CD14-positive monocyte (primary cell): ENCODE measurements at regions of chr19 and their contacts with region 1.

Region 1: DNA sequence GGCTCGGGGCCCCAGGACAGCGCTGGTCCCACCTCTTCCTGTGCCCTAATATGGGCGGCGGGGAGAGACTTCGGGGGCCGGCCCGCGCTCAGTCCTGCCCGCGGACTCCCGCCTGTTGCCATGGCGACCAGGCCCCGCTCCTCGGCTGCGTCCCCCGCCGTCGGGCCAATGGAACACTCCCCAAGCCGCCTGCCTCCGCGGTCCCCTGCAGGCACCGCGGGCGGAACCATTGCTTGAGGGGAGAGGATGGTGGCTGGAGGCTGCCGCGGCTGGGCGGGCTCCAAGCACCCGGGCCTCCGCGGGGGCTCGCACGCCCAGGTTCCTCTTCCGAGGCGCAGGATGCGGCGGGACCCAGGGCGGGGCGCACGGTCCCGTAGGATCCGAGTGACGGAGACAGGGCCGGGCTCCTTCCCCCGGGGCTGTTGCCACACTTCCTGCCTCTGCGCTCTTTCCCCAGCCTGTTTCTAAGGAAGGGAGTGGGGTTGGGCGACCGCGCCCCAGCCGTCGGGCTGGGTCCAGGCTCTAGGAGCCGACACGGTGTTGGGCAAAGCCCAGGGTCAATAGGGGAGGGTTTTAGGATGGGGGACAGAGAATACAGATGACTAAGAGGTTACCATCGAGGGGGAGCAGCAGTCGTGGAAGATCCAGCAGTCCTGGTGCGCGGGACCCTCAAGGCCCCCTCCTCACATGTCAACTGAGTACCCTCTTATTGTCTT is 1.2 kb upstream of the JUNB start:
- DNase-seq: peak; percentile 97 to 99 (median 99)
- H3K4me3 ChIP-seq: peak overlapping the region; percentile 85 to 100 (median 100)
- H3K4me3 Mint-ChIP-seq: peak overlapping the region; percentile 95 to 98
- H3K27ac ChIP-seq: peak overlapping the region; percentile 95 to 100
- H3K27ac Mint-ChIP-seq: peak overlapping the region; percentile 99 to 100 (median 100)
- H3K4me1 ChIP-seq: peaks cover 59 to 64% of the 10 kb centered on the region in 2 donors
- H3K4me1 Mint-ChIP-seq: peaks cover 38% of the 10 kb centered on the region
- H3K27me3 ChIP-seq: no peaks in the 10 kb centered on the region
- H3K27me3 Mint-ChIP-seq: peaks cover 0 to 4% (median 1%) of the 10 kb centered on the region in 3 donors
- CTCF ChIP-seq: no peak

Region 2: DNA sequence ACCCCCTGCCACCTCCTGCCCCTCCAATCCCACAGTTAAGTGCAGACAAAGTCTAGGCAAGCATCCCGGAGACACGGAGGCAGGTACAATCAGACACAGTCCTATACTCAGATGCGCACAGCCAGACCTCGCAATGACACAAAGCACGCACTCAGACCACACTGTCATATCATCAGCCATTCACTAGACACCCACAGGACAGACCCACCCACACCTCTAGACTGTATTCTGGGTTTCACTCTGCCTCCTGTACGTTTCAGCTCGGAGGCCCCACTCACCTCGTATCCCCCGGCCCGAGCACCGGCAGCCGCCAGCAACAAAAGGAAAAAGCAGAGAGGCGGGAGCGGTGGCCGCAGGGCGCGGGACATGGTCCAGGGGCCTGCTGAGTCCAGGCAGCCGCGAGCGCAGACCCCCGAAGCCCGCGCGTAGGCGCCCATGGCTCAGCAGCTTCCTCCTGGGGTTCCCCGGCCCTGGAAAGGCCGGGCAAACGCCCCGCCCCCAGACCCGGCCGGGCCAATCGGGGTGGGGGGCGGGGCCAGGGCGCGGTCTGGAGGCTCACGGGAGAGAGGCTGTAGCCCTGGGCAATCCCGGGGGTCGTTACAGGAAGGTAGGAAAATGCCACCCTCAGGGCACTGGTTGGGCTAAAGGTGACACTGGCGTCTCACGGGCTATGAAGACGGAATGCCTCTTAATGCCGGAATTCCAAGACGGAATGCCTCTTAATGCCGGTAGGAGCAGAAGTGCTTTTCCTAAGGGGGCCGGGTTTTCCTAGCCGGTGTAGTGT is 123.6 kb before region 1 on chr19 and contains the starts of genes MAN2B1 and WDR83:
- intact Hi-C with region 1: loop called in 1 of 2 experiments (anchors 5 kb)
- DNase-seq: peak; percentile 76 to 84 (median 78)
- H3K4me3 ChIP-seq: peak within 1 kb of the TSS; percentile 93 to 98 (median 96)
- H3K4me3 Mint-ChIP-seq: peak within 1 kb of the TSS; percentile 95 to 98
- H3K27ac ChIP-seq: peak within 1 kb of the TSS; percentile 76 to 100
- H3K27ac Mint-ChIP-seq: peak within 1 kb of the TSS; percentile 94 to 100 (median 97)
- H3K4me1 ChIP-seq: peaks cover 49 to 61% of the 10 kb centered on the region in 2 donors
- H3K4me1 Mint-ChIP-seq: peaks cover 42% of the 10 kb centered on the region
- H3K27me3 ChIP-seq: no peaks in the 10 kb centered on the region
- H3K27me3 Mint-ChIP-seq: peaks cover 0 to 3% (median 2%) of the 10 kb centered on the region in 3 donors
- CTCF ChIP-seq: no peak
- polyA plus RNA-seq, gene MAN2B1: 218 to 305 (median 295) TPM
- polyA plus RNA-seq, gene WDR83: 7.9 to 9.9 (median 8.5) TPM

Region 3: GRCh38 chr19:12777217-12778016 is 12.6 kb before region 1 on chr19:
- intact Hi-C with region 1: loop called (anchors 1 to 2 kb)
- DNase-seq: peak; percentile 73 to 83 (median 80)
- H3K4me3 ChIP-seq: peak overlapping the region; percentile 76 to 83 (median 82)
- H3K4me3 Mint-ChIP-seq: peak overlapping the region; percentile 87 to 93
- H3K27ac ChIP-seq: peak overlapping the region; percentile 84 to 94
- H3K27ac Mint-ChIP-seq: peak overlapping the region; percentile 93 to 97 (median 96)
- H3K4me1 ChIP-seq: peaks cover 50 to 62% of the 10 kb centered on the region in 2 donors
- H3K4me1 Mint-ChIP-seq: peaks cover 45% of the 10 kb centered on the region
- H3K27me3 ChIP-seq: no peaks in the 10 kb centered on the region
- H3K27me3 Mint-ChIP-seq: peaks cover 3 to 7% (median 5%) of the 10 kb centered on the region in 3 donors
- CTCF ChIP-seq: peak; percentile 99

Region 4: DNA sequence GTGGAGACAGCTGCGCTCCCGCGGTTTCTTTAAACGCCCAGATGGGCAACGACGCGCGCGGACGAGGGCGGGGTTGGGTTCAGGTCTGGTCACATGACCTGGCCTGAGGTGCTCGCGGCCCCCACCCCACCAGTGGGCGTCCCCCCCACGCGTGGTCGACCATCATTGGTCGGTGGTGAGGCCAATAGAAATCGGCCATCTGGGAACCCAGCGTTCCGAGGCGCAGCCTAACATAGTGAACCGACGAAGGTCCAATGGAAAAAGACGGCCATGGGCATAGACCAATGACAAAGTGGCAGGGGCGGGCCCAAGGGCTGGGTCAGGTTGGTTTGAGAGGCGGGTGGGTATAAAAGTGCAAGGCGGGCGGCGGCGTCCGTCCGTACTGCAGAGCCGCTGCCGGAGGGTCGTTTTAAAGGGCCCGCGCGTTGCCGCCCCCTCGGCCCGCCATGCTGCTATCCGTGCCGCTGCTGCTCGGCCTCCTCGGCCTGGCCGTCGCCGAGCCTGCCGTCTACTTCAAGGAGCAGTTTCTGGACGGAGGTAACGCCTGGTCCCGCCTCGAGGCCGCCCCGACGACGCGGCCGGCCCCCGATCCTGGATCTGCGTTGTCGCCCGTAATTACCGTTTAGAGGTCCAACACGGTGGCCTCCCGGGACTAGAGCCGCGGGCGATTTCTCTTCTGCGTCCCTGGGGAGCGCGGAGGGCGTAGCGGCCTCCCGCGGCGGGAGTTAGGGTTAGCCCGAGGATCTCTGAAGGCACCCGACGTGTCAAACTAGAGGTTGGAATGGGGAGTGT is 148.4 kb after region 1 on chr19 and contains the start of gene CALR:
- intact Hi-C with region 1: loop called in 1 of 2 experiments (anchors 5 kb)
- DNase-seq: peak; percentile 99 to 100 (median 100)
- H3K4me3 ChIP-seq: peak within 1 kb of the TSS; percentile 77 to 100 (median 77)
- H3K4me3 Mint-ChIP-seq: peak within 1 kb of the TSS; percentile 97 to 99
- H3K27ac ChIP-seq: peak within 1 kb of the TSS; percentile 82 to 98
- H3K27ac Mint-ChIP-seq: peak within 1 kb of the TSS; percentile 91 to 97 (median 96)
- H3K4me1 ChIP-seq: peaks cover 47 to 64% of the 10 kb centered on the region in 2 donors
- H3K4me1 Mint-ChIP-seq: peaks cover 54% of the 10 kb centered on the region
- H3K27me3 ChIP-seq: no peaks in the 10 kb centered on the region
- H3K27me3 Mint-ChIP-seq: peaks cover 0 to 2% (median 1%) of the 10 kb centered on the region in 3 donors
- CTCF ChIP-seq: no peak
- polyA plus RNA-seq, gene CALR: 109 to 441 (median 133) TPM

Region 5: GRCh38 chr19:13093407-13094105 is 303.5 kb after region 1 on chr19:
- intact Hi-C with region 1: loop called in 1 of 2 experiments (anchors 10 kb)
- DNase-seq: peak; percentile 84 to 89 (median 88)
- H3K4me3 ChIP-seq: peak overlapping the region in 1 of 3 experiments; percentile 84
- H3K4me3 Mint-ChIP-seq: peak overlapping the region; percentile 46 to 52
- H3K27ac ChIP-seq: no peak overlapping the region
- H3K27ac Mint-ChIP-seq: peak overlapping the region in 1 of 7 donors; percentile 25
- H3K4me1 ChIP-seq: peaks cover 26 to 39% of the 10 kb centered on the region in 2 donors
- H3K4me1 Mint-ChIP-seq: peaks cover 22% of the 10 kb centered on the region
- H3K27me3 ChIP-seq: no peaks in the 10 kb centered on the region
- H3K27me3 Mint-ChIP-seq: peaks cover 0 to 5% (median 3%) of the 10 kb centered on the region in 3 donors
- CTCF ChIP-seq: peak; percentile 97

Region 6: DNA sequence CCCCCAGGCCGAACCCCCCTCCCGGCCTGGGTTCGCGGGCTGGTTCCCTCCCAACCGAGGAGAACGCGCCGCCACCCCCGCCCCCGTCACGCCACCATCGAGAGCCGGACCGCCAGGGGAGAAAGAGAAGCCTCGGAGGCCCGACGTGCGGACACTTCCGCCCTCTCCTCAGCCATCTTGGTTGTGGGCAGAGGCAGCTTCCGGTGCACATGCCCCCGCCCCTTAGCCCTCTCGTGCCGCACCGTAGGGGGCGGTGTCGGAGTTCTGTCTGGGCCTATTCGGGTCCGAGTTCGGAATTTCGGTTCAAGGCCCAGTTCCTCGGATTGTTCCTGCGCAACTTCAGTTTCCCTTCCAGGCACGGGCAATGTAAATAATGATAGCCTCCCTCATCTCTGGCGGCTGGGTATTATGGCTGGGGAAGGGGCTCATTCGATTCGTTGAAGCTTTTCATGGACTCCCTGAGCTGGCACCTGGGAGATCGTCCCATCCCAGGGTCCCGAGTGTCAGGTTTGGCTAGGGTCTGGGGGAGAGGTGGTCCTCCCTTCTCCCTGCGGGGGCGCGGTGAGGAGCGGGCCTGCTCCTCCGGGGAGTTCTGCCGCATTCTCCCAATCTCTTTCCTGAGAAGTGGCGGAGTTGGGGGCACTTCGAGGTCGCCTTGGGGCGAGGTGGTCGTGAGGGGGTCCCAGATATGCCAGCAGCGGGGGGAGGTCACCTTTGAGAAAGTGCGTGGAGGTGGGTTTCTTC is 360.3 kb after region 1 on chr19 and contains the starts of genes IER2 and STX10:
- intact Hi-C with region 1: loop called in 1 of 2 experiments (anchors 5 kb)
- DNase-seq: peak; percentile 94 to 97 (median 96)
- H3K4me3 ChIP-seq: peak within 1 kb of the TSS; percentile 86 to 100 (median 96)
- H3K4me3 Mint-ChIP-seq: peak within 1 kb of the TSS; percentile 98 to 99
- H3K27ac ChIP-seq: peak within 1 kb of the TSS; percentile 95 to 97
- H3K27ac Mint-ChIP-seq: peak within 1 kb of the TSS; percentile 98 to 99 (median 99)
- H3K4me1 ChIP-seq: peaks cover 31 to 46% of the 10 kb centered on the region in 2 donors
- H3K4me1 Mint-ChIP-seq: peaks cover 33% of the 10 kb centered on the region
- H3K27me3 ChIP-seq: no peaks in the 10 kb centered on the region
- H3K27me3 Mint-ChIP-seq: peaks cover 0 to 15% (median 4%) of the 10 kb centered on the region in 3 donors
- CTCF ChIP-seq: peak; percentile 43
- polyA plus RNA-seq, gene IER2: 355 to 804 (median 601) TPM
- polyA plus RNA-seq, gene STX10: 158 to 392 (median 172) TPM

Region 7: DNA sequence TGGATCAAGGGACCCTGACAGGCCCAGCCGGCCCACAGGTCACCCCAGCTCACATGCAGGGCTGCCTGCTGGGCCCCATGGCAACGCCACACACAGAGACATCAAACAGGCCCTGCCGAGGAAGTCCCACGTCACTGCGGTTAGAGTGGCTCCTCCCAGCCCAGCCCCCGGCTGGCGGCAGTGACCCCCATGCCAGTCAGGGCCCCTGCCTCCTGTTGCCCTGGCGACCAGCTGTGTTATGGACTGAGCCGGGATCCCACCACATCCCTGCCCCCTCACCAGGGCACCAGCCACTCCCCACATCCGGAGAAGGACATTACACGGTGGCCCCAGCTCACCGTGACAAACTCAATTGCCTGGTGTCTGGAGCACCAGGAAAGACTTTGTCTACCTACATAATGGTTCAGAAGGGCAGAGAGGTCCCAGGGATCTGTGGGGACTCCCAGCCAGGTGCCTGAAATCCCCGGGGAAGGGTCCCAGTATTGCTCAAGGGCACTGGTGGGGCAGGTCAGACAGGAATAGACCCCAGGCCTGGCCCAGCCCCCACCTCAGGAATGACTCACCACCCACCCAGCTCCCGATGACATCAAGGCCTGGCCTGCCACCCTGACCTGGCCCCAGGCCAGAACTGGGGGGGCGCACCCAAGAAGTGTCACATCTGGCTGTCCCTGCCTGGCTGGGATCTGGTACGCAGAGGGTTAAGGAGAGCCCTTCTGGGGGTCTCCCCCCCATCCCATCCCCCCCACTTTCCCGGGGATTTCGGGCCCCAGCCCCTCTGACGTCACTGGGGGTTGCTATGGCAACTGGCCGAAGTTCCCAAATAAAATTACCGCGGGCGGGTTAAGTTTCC is 1056.7 kb after region 1 on chr19:
- intact Hi-C with region 1: loop called (anchors 10 kb)
- DNase-seq: peak; percentile 98 to 99 (median 99)
- H3K4me3 ChIP-seq: peak overlapping the region; percentile 39 to 65 (median 63)
- H3K4me3 Mint-ChIP-seq: peak overlapping the region; percentile 78 to 85
- H3K27ac ChIP-seq: peak overlapping the region; percentile 99
- H3K27ac Mint-ChIP-seq: peak overlapping the region; percentile 99 to 100 (median 100)
- H3K4me1 ChIP-seq: peaks cover 67 to 68% of the 10 kb centered on the region in 2 donors
- H3K4me1 Mint-ChIP-seq: peaks cover 66% of the 10 kb centered on the region
- H3K27me3 ChIP-seq: no peaks in the 10 kb centered on the region
- H3K27me3 Mint-ChIP-seq: peaks cover 0 to 5% (median 0%) of the 10 kb centered on the region in 3 donors
- CTCF ChIP-seq: no peak